Naive thymus-derived CD8-positive, alpha-beta T cell (primary cell): ENCODE measurements at regions of chr14 and their contacts with region 1.

Region 1: GRCh38 chr14:95515596-95516552 is 576 bp downstream of the SYNE3 start:
- DNase-seq: peak; percentile 76 to 85 (median 79)
- ATAC-seq: peak; percentile 81 to 93
- H3K4me3 Mint-ChIP-seq: peak overlapping the region; percentile 86 to 95 (median 88)
- H3K27ac Mint-ChIP-seq: peak overlapping the region; percentile 80 to 96 (median 91)
- H3K4me1 Mint-ChIP-seq: peaks cover 44 to 77% (median 74%) of the 10 kb centered on the region in 4 donors
- H3K27me3 Mint-ChIP-seq: no peaks in the 10 kb centered on the region

Region 2: DNA sequence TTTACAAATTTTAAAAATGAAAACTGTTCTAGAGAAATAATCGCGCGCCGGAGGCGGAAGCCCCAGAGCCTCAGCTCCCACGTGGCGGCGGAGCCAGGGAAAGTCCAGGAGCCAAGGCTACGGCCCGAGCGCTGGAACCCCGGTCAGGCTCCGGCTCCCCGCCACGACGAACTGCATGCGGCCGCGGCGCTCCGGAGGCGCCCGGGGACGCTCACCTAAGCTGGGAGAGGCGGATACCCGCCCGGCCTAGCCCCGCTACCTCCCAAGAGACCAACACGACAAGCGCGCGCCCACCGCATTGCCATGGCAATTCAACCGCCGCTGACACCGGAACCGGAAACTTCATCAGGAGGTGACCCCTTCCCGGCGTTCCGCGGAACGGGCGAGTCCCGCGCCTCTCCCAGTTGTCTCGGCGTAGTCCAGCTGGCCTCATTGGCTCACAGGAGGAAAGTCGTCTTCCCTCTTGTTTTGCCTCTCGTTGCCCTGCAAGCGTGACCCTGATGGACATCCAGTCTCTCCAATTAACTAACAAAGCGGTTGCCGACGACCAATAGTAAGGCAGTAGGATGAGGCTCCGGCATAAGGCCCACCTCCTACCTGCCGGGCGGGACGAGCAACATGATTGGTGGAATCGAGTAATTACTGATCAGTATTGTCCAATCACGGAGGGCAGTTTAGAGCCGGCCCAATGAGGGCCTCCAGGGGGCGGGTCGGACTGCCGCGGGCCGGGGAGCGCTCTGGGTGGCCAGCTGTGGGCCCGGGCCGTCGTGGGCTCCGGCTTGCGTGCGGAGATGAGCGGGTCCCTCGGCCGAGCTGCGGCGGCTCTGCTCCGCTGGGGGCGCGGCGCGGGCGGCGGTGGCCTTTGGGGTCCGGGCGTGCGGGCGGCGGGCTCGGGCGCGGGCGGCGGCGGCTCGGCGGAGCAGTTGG is 18.7 kb after region 1 on chr14 and contains the start of gene GLRX5:
- POLR2A ChIA-PET with region 1: interaction called, 45 read pairs
- DNase-seq: peak; percentile 92 to 100 (median 98)
- ATAC-seq: peak; percentile 86 to 87
- H3K4me3 Mint-ChIP-seq: peak within 1 kb of the TSS; percentile 85 to 98 (median 96)
- H3K27ac Mint-ChIP-seq: peak within 1 kb of the TSS; percentile 93 to 98 (median 96)
- H3K4me1 Mint-ChIP-seq: peaks cover 33 to 78% (median 69%) of the 10 kb centered on the region in 4 donors
- H3K27me3 Mint-ChIP-seq: no peaks in the 10 kb centered on the region
- polyA plus RNA-seq, gene GLRX5: 61.6 to 87.6 (median 67.6) TPM

Region 3: GRCh38 chr14:95577067-95577800 is 61.4 kb after region 1 on chr14:
- POLR2A ChIA-PET with region 1: no interaction called
- DNase-seq: no peak
- ATAC-seq: no peak
- H3K4me3 Mint-ChIP-seq: no peak overlapping the region
- H3K27ac Mint-ChIP-seq: no peak overlapping the region
- H3K4me1 Mint-ChIP-seq: no peaks in the 10 kb centered on the region
- H3K27me3 Mint-ChIP-seq: peaks cover 9 to 33% (median 12%) of the 10 kb centered on the region in 5 donors